Gastrocnemius medialis (tissue), 4 donors: ENCODE measurements at regions of chr1 and their contacts with region 1.

Region 1: DNA sequence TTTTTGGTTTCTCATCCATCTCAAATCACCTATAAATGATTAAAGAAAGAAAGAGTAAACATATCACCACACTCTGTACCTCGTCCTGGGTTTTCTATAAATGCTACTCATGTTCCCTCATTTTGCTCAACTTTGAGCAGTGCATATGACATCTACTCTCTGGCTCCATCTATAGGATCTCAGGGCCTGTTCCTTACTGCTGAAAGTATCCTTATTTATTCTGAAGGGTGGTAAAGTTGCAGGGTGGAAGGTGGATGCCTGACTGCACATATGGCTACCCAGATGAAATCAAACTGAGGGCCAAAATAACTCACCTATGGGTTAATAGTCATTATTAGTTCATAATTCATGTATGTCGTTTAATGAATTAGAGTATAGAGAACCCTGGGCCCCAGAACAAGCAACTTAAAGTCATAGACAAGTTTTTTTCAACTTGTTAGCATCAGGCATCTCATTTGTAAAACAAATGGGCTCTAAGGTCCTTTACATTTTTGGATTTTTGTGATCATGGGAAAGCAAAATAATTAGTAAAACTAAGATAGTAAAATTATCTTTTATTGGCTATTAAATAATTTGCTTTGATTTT is 46.5 kb downstream of the NCF2 start:
- DNase-seq: no peak
- ATAC-seq: peak; percentile 47 to 93
- H3K4me3 ChIP-seq: no peak overlapping the region
- H3K27ac ChIP-seq: peak overlapping the region in 1 of 4 donors; percentile 44
- H3K4me1 ChIP-seq: no peaks in the 10 kb centered on the region
- H3K27me3 ChIP-seq: no peaks in the 10 kb centered on the region
- CTCF ChIP-seq: peak; percentile 23 to 59 (median 46)
- POLR2A ChIP-seq: no peak

Region 2: DNA sequence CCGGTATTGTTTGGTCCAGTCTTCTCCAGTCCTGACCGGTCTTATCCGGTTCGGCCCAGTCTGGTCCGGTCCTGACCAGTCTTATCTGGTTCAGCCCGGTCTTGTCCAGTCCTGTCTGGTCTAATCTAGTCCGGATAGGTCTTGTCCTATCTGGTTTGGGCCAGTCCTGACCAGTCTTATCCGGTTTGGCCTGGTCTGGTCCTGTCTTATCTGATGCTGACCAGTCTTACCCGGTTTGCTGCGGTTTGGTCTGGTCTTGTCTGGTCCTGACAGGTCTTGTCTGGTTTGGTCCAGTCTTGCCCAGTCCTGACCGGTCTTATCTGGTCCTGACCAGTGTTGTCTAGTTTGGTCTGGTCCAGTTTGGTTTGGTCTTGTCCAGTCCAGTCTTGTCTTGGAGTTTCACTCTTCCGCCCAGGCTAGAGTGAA is 674.5 kb before region 1 on chr1:
- in situ Hi-C with region 1: loop called in 1 of 4 experiments (anchors 25 kb)
- intact Hi-C with region 1: no loop called
- DNase-seq: no peak
- ATAC-seq: no peak
- H3K4me3 ChIP-seq: no peak overlapping the region
- H3K27ac ChIP-seq: no peak overlapping the region
- H3K4me1 ChIP-seq: no peaks in the 10 kb centered on the region
- H3K27me3 ChIP-seq: no peaks in the 10 kb centered on the region
- CTCF ChIP-seq: no peak
- POLR2A ChIP-seq: no peak

Region 3: GRCh38 chr1:183461350-183461749 is 82.4 kb before region 1 on chr1:
- in situ Hi-C with region 1: loop called in 2 of 4 experiments (anchors 5 to 10 kb)
- intact Hi-C with region 1: no loop called
- DNase-seq: no peak
- ATAC-seq: no peak
- H3K4me3 ChIP-seq: no peak overlapping the region
- H3K27ac ChIP-seq: no peak overlapping the region
- H3K4me1 ChIP-seq: no peaks in the 10 kb centered on the region
- H3K27me3 ChIP-seq: peaks cover 0 to 6% (median 3%) of the 10 kb centered on the region in 3 donors
- CTCF ChIP-seq: no peak
- POLR2A ChIP-seq: no peak